Naive thymus-derived CD4-positive, alpha-beta T cell (primary cell): ENCODE measurements at regions of chr5 and their contacts with region 1.

Region 1: DNA sequence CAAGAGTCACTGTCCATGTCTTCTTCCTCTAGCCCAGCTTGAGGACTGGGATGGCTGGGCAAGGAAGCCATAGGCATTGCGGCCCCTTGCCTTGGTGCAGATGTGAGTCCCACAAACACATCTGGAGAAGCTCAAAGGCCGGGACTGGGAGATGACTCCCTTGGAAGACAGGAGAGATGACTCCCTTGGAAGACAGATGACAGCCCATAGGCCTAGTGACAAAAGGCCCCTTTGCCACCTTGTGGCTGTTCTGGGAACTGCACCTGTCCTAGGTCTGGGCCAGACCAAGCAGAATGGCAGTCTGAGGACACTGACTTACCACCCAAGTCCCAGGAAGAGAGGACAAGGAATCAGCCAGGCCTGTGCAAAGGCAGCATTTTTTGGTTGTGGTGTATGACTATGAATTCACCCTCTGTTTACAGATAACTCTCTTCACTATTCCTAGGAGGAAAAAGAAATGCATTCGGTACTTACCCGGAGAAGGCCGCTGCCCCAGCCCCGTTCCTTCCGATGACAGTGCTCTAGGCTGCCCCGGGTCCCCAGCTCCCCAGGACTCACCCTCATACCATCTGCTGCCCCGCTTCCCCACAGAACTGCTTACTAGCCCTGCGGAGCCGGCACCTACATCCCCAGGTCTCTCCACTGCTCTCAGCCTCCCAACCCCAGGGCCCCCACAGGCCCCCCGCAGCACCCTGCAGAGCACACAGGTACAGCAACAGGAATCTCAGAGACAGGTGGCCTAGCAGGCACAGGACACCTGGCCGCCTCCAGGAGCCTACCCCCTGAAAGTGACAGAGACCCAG is 30.8 kb downstream of the SKP1 start:
- DNase-seq: peak; percentile 64 to 87 (median 77)
- ATAC-seq: peak; percentile 84
- H3K4me3 ChIP-seq: no peak overlapping the region
- H3K4me3 Mint-ChIP-seq: peak overlapping the region in 4 of 10 donors; percentile 18 to 54 (median 27)
- H3K27ac ChIP-seq: peak overlapping the region; percentile 63
- H3K27ac Mint-ChIP-seq: peak overlapping the region in 8 of 9 donors; percentile 75 to 93 (median 90)
- H3K4me1 ChIP-seq: peaks cover 5 to 29% of the 10 kb centered on the region in 2 donors
- H3K4me1 Mint-ChIP-seq: peaks cover 21 to 67% (median 46%) of the 10 kb centered on the region in 7 donors
- H3K27me3 ChIP-seq: no peaks in the 10 kb centered on the region
- H3K27me3 Mint-ChIP-seq: no peaks in the 10 kb centered on the region

Region 2: GRCh38 chr5:134026521-134027268 is 119.3 kb before region 1 on chr5:
- CTCF ChIA-PET with region 1: interaction called, 8 read pairs
- POLR2A ChIA-PET with region 1: interaction called, 1,333 read pairs
- intact Hi-C with region 1: loop called in 1 of 2 experiments (anchors 1 kb)
- DNase-seq: peak in 8 of 9 donors; percentile 41 to 73 (median 62)
- ATAC-seq: peak; percentile 96
- H3K4me3 ChIP-seq: no peak overlapping the region
- H3K4me3 Mint-ChIP-seq: no peak overlapping the region
- H3K27ac ChIP-seq: no peak overlapping the region
- H3K27ac Mint-ChIP-seq: peak overlapping the region in 2 of 9 donors; percentile 36 to 52
- H3K4me1 ChIP-seq: no peaks in the 10 kb centered on the region
- H3K4me1 Mint-ChIP-seq: peaks cover 1 to 6% (median 4%) of the 10 kb centered on the region in 7 donors
- H3K27me3 ChIP-seq: no peaks in the 10 kb centered on the region
- H3K27me3 Mint-ChIP-seq: peaks cover 0 to 17% (median 0%) of the 10 kb centered on the region in 5 donors

Region 3: DNA sequence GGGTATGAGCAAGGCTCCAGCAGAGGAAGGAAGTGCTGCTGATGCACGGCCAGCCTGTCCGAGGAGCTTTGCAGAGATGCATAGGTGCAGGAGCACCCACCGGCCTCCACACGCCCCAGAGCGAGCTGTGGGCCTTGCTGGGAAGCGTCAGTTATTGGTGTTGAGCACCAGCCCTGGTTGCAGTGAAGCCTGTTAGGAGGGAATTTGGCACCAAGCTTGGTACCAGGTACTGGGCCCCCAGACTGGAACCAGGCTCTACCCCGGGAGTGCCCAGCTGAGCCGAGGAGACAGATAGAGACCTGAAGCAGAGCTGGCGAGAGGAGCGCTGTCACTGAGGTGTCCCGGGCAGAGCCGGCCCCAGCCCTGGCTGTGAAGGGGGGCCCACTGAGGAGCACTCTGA is 26.3 kb before region 1 on chr5:
- CTCF ChIA-PET with region 1: interaction called, 394 read pairs
- POLR2A ChIA-PET with region 1: no interaction called
- intact Hi-C with region 1: loop called in 1 of 2 experiments (anchors 1 kb)
- DNase-seq: no peak
- ATAC-seq: no peak
- H3K4me3 ChIP-seq: peak overlapping the region; percentile 86
- H3K4me3 Mint-ChIP-seq: peak overlapping the region; percentile 81 to 100 (median 98)
- H3K27ac ChIP-seq: peak overlapping the region; percentile 97
- H3K27ac Mint-ChIP-seq: peak overlapping the region; percentile 82 to 99 (median 94)
- H3K4me1 ChIP-seq: peaks cover 24 to 81% of the 10 kb centered on the region in 2 donors
- H3K4me1 Mint-ChIP-seq: peaks cover 15 to 73% (median 32%) of the 10 kb centered on the region in 7 donors
- H3K27me3 ChIP-seq: no peaks in the 10 kb centered on the region
- H3K27me3 Mint-ChIP-seq: peaks cover 0 to 27% (median 0%) of the 10 kb centered on the region in 5 donors

Region 4: GRCh38 chr5:134125039-134126015 is 20.7 kb before region 1 on chr5:
- CTCF ChIA-PET with region 1: interaction called, 394 read pairs
- POLR2A ChIA-PET with region 1: no interaction called
- intact Hi-C with region 1: loop called in 1 of 2 experiments (anchors 1 kb)
- DNase-seq: no peak
- ATAC-seq: no peak
- H3K4me3 ChIP-seq: peak overlapping the region; percentile 86
- H3K4me3 Mint-ChIP-seq: peak overlapping the region; percentile 93 to 100 (median 98)
- H3K27ac ChIP-seq: peak overlapping the region; percentile 97
- H3K27ac Mint-ChIP-seq: peak overlapping the region; percentile 80 to 99 (median 98)
- H3K4me1 ChIP-seq: peaks cover 61 to 100% of the 10 kb centered on the region in 2 donors
- H3K4me1 Mint-ChIP-seq: peaks cover 31 to 91% (median 69%) of the 10 kb centered on the region in 7 donors
- H3K27me3 ChIP-seq: no peaks in the 10 kb centered on the region
- H3K27me3 Mint-ChIP-seq: peaks cover 0 to 3% (median 0%) of the 10 kb centered on the region in 5 donors

Region 5: DNA sequence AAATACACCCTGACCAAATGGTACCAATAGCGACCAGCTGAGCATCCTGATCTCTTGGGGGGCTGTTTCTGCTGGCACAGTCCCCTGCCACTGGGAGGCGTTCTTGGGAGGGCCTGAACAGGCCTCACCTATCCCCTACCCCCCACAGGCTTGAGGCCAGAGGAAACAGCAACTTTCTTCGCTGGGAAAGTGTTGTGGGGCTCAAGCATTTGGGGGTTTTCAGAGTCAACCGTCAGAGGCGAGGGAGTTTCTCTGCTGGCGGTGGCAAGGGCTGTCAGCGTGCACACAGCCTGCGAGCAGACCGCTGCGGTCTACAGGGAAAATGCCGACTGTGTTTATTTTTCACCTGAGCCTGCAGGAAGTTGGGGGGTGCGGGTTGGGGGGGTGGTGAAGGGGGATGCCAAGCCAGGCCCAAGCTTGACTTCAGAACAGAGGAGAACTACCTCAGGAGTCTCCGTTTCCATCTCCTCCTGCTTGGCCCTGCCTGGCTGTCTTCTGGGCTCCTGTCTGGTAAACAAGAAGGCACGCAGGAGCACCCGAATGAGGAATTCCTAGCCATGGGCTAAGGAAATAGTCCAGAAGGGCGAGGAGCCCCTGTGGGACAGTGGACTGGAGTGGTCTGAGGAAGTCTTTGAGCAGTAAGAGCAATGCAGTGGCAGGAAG is 13.5 kb before region 1 on chr5:
- CTCF ChIA-PET with region 1: interaction called, 39 read pairs
- POLR2A ChIA-PET with region 1: no interaction called
- intact Hi-C with region 1: loop called in 1 of 2 experiments (anchors 1 kb)
- DNase-seq: peak; percentile 52 to 94 (median 87)
- ATAC-seq: peak; percentile 87
- H3K4me3 ChIP-seq: peak overlapping the region; percentile 86
- H3K4me3 Mint-ChIP-seq: peak overlapping the region; percentile 93 to 100 (median 98)
- H3K27ac ChIP-seq: peak overlapping the region; percentile 97
- H3K27ac Mint-ChIP-seq: peak overlapping the region; percentile 90 to 99 (median 98)
- H3K4me1 ChIP-seq: peaks cover 92 to 97% of the 10 kb centered on the region in 2 donors
- H3K4me1 Mint-ChIP-seq: peaks cover 57 to 100% (median 90%) of the 10 kb centered on the region in 7 donors
- H3K27me3 ChIP-seq: no peaks in the 10 kb centered on the region
- H3K27me3 Mint-ChIP-seq: peaks cover 0 to 2% (median 0%) of the 10 kb centered on the region in 5 donors

Region 6: DNA sequence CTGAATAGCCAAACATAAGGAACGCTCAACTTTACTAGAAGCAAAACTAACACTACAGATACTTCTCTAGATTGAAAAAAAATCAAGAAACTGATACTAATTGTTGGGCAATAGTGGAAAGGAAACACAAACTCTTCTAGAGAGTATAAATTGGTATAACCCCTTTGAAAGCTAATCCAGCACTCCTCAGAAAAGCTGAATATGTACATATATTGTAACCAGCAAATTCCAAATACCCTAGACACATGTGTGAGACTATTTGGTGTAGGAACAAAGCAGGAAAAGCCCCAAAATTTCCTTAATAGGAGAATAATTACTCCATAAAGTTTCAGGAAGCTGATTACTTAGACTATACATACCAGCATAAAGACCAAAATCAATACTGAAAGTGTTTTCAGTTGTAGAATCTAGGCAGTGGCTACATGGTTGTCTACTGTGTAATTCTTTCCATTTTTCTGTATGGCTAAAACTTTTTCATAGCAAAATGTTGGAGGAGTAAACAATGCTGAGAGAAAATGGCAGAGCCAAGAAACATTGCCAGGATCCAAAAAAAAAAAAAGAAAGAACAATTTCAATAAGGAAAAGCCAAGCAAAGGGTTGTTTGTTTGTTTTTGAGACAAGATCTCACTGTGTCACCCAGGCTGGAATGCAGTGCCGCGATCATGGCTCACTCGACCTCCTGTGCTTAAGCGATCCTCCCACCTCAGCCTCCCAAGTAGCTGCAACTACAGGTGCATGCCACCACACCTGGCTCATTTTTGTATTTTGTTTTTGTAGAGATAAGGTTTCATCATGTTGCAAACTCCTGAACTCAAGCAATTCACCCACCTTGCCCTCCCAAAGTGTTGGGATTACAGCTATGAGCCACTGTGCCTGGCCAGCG is 15.8 kb after region 1 on chr5:
- CTCF ChIA-PET with region 1: interaction called, 6 read pairs
- POLR2A ChIA-PET with region 1: interaction called, 48 read pairs
- intact Hi-C with region 1: no loop called
- DNase-seq: no peak
- ATAC-seq: no peak
- H3K4me3 ChIP-seq: no peak overlapping the region
- H3K4me3 Mint-ChIP-seq: no peak overlapping the region
- H3K27ac ChIP-seq: no peak overlapping the region
- H3K27ac Mint-ChIP-seq: peak overlapping the region in 6 of 9 donors; percentile 20 to 78 (median 38)
- H3K4me1 ChIP-seq: peaks cover 0 to 5% of the 10 kb centered on the region in 2 donors
- H3K4me1 Mint-ChIP-seq: peaks cover 13 to 70% (median 49%) of the 10 kb centered on the region in 7 donors
- H3K27me3 ChIP-seq: no peaks in the 10 kb centered on the region
- H3K27me3 Mint-ChIP-seq: no peaks in the 10 kb centered on the region

Region 7: GRCh38 chr5:134204575-134204974 is 58.6 kb after region 1 on chr5:
- CTCF ChIA-PET with region 1: no interaction called
- POLR2A ChIA-PET with region 1: no interaction called
- intact Hi-C with region 1: no loop called
- DNase-seq: no peak
- ATAC-seq: no peak
- H3K4me3 ChIP-seq: no peak overlapping the region
- H3K4me3 Mint-ChIP-seq: no peak overlapping the region
- H3K27ac ChIP-seq: no peak overlapping the region
- H3K27ac Mint-ChIP-seq: peak overlapping the region in 2 of 9 donors; percentile 44 to 65
- H3K4me1 ChIP-seq: peaks cover 0 to 17% of the 10 kb centered on the region in 2 donors
- H3K4me1 Mint-ChIP-seq: peaks cover 24 to 53% (median 40%) of the 10 kb centered on the region in 7 donors
- H3K27me3 ChIP-seq: no peaks in the 10 kb centered on the region
- H3K27me3 Mint-ChIP-seq: no peaks in the 10 kb centered on the region

Region 8: DNA sequence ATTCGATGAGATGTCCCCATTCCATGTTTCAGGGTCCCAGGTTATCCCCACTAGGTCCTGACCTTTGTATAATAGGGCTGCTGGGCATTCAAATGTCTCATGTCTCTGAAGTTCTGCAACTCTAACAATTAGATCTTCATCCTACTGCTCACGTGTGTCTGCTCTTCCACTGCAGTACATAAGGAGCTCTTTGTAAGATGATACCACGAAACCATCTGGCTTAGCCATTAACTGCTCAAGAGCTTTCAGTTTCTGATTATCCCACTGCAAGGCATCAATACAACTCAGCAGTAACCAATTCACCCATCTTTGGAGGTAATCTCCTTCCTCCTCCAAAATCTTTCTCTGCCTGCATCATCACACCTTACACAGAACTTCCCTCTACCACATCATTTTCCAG is 129.8 kb after region 1 on chr5:
- CTCF ChIA-PET with region 1: no interaction called
- POLR2A ChIA-PET with region 1: no interaction called
- intact Hi-C with region 1: no loop called
- DNase-seq: no peak
- ATAC-seq: no peak
- H3K4me3 ChIP-seq: no peak overlapping the region
- H3K4me3 Mint-ChIP-seq: no peak overlapping the region
- H3K27ac ChIP-seq: no peak overlapping the region
- H3K27ac Mint-ChIP-seq: peak overlapping the region in 1 of 9 donors; percentile 41
- H3K4me1 ChIP-seq: no peaks in the 10 kb centered on the region
- H3K4me1 Mint-ChIP-seq: peaks cover 0 to 4% (median 0%) of the 10 kb centered on the region in 7 donors
- H3K27me3 ChIP-seq: no peaks in the 10 kb centered on the region
- H3K27me3 Mint-ChIP-seq: peaks cover 2 to 12% (median 12%) of the 10 kb centered on the region in 5 donors

Region 9: DNA sequence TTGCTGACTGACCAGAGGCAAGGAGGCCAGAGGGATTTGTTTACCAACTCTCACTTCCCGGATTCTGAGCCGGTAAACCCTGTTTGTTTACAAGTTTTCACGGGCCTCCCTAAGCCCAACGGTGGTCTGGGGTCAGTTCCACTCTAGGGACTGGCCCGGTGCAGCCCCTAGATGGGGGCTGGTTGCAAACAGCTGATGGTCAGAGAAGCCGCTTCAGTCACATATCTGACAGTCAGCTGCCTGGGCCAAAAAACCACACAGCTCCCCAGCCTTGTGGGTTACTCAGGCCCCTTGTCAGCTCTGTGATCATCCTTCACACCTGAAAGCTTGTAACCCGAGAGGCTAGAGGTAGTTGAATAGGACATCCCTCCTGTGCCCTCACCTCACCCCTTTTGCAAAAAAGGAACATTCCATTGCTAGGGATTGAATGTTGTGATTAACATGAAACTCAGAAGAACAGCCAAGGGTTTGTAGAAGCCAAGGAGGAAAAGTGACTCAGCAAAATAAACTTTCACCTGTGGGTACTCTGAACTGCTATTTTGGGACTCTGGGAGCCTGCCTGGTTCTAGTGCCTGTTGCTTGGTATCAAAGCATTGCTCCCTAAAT is 446.3 kb after region 1 on chr5:
- CTCF ChIA-PET with region 1: no interaction called
- POLR2A ChIA-PET with region 1: no interaction called
- intact Hi-C with region 1: no loop called
- DNase-seq: no peak
- ATAC-seq: no peak
- H3K4me3 ChIP-seq: no peak overlapping the region
- H3K4me3 Mint-ChIP-seq: no peak overlapping the region
- H3K27ac ChIP-seq: no peak overlapping the region
- H3K27ac Mint-ChIP-seq: peak overlapping the region in 1 of 9 donors; percentile 45
- H3K4me1 ChIP-seq: no peaks in the 10 kb centered on the region
- H3K4me1 Mint-ChIP-seq: peaks cover 0 to 30% (median under 1%) of the 10 kb centered on the region in 7 donors
- H3K27me3 ChIP-seq: no peaks in the 10 kb centered on the region
- H3K27me3 Mint-ChIP-seq: no peaks in the 10 kb centered on the region